ENCODE measurements at regions of chr7 and their contacts with region 1.

Region 1: GRCh38 chr7:8295638-8296361 is 33.8 kb upstream of the ICA1 start:
- DNase-seq: peak; percentile 71
- H3K4me3 ChIP-seq: peak overlapping the region in 1 of 2 experiments; percentile 17; a peak in 1 of 4 replicates
- H3K27ac ChIP-seq: peak overlapping the region in 1 of 2 experiments; percentile 100; a peak in 2 of 4 replicates
- H3K4me1 ChIP-seq: peaks cover 0 to 21% of the 10 kb centered on the region in 2 experiments; a peak in 2 of 4 replicates
- H3K27me3 ChIP-seq: no peaks in the 10 kb centered on the region
- CTCF ChIP-seq: peak; percentile 93
- EP300 ChIP-seq: peak in 1 of 2 experiments; percentile 60; a peak in 2 of 4 replicates
- RAD21 ChIP-seq: peak; percentile 100

Region 2: DNA sequence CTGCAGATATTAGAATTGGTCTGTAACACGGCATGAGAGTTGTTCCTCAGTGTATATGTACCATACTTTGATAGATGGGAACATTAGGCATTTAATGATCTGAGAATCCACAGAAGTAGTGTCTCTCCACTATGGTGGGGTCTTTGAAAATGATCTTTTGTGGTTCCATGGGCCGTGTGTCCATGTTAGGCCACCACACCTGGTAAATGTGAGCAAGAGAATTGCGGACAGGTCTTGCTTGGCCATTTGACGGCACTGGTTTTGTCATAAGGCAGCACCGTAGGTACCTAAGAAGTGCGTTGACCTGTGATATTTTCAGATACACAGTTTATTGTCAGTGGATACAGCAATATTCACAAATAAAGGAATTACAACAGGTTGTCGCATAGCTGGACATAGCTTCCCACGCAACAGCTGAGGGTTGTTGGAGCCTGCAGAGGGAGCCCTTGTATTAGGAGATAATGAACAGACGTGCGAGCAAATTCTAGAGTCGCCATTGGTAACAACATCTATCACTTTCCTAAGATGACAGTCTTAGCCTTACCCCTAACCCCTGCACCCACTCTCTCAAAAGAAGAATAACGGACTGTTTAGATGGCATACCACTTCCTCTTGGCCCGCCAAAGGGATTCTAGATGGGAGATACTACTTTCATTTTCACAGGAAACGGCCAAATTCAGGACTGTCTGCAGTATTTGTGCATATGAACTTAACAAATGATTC is 871.5 kb before region 1 on chr7:
- CTCF ChIA-PET with region 1: interaction called, 29 read pairs
- POLR2A ChIA-PET with region 1: interaction called, 3 read pairs
- DNase-seq: peak; percentile 62
- H3K4me3 ChIP-seq: peak overlapping the region; percentile 51 to 55
- H3K27ac ChIP-seq: no peak overlapping the region
- H3K4me1 ChIP-seq: peaks cover 0 to 9% of the 10 kb centered on the region in 2 experiments; a peak in 2 of 4 replicates
- H3K27me3 ChIP-seq: no peaks in the 10 kb centered on the region
- CTCF ChIP-seq: peak; percentile 100
- EP300 ChIP-seq: no peak
- RAD21 ChIP-seq: peak; percentile 99

Region 3: DNA sequence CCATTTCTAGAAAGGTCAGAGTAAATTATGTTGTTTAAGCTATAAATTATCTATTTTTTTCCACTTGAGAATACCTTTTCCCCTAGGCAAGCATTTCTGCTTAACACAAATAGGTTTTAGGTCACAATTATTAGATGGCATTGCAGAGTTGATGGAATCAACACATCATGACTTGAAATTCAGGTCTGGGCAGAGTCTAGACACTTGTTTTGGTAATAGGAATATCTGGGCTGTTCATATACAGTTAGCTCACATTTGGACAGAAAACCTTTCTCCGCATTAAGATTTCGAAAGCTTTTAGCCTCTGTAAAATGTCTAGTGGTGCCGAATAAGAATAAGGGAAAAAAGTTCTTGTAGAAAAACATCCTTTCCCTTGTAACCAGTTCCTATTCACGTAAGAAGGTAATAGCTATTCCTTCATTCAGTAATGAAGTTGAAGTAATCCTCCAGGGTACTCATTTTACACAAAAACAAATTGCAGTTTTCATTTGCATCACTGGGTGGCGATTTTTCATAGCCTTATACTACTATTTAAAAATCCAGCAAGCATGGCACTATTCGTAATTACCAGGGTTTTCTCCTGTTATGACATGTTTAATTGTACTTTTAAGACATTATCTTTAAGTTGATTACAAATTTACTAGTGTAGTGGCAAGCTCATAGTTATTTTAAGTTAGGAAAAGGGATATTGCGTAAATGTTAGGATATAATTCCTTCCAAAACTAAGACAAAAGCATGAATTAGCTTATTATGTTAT is 614.4 kb before region 1 on chr7:
- CTCF ChIA-PET with region 1: interaction called, 37 read pairs
- POLR2A ChIA-PET with region 1: interaction called, 3 read pairs
- DNase-seq: peak; percentile 48
- H3K4me3 ChIP-seq: no peak overlapping the region
- H3K27ac ChIP-seq: peak overlapping the region in 1 of 2 experiments; percentile 90; a peak in 2 of 4 replicates
- H3K4me1 ChIP-seq: peaks cover 0 to 12% of the 10 kb centered on the region in 2 experiments; a peak in 2 of 4 replicates
- H3K27me3 ChIP-seq: no peaks in the 10 kb centered on the region
- CTCF ChIP-seq: peak; percentile 93
- EP300 ChIP-seq: no peak
- RAD21 ChIP-seq: peak; percentile 93

Region 4: DNA sequence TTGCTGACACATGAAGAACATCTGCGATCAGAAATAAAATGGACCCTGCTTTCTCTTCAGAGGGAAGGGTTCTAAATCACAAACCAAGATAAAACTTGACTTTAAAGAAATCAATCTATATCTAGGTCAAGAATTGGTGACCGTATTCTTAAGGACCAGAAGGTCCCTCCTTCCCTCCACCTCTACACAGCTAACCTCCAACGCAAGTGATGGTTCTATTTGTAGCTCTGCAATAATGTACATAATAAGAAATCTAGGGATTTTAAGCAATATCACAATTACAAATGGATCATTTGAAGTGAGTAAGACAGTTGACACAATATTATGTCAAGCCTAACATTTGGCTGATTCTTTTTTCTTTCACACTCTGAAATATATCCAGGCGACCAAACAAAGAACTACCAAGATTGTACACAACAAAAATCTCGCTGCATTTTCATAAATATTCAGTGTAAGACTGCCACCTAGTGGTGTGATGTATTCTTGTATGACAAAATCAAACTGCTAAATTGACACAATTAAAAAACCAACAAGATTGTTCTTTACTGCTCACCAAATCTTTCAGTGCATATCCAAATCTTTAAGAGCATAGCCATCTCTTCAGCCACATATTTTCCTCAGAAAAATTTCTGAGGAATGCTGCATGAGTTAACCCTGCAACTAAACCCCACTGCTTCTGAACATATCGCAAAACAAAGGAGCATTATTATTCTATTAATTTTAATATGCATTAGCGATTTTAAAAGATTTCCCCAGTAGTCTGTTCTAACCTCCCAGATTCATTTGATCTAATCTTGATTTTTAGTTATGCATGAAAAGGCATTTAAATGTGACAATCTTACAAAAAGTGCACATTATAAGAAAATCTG is 78.4 kb before region 1 on chr7:
- CTCF ChIA-PET with region 1: interaction called, 21 read pairs
- POLR2A ChIA-PET with region 1: interaction called, 3 read pairs
- DNase-seq: peak; percentile 28
- H3K4me3 ChIP-seq: no peak overlapping the region; a peak in 1 of 4 replicates
- H3K27ac ChIP-seq: peak overlapping the region in 1 of 2 experiments; percentile 93; a peak in 2 of 4 replicates
- H3K4me1 ChIP-seq: peaks cover 0 to 67% of the 10 kb centered on the region in 2 experiments; a peak in 2 of 4 replicates
- H3K27me3 ChIP-seq: no peaks in the 10 kb centered on the region
- CTCF ChIP-seq: peak; percentile 90
- EP300 ChIP-seq: no peak
- RAD21 ChIP-seq: peak; percentile 89

Region 5: GRCh38 chr7:8254667-8255066 is 41.1 kb before region 1 on chr7:
- CTCF ChIA-PET with region 1: interaction called, 11 read pairs
- POLR2A ChIA-PET with region 1: interaction called, 122 read pairs
- DNase-seq: no peak
- H3K4me3 ChIP-seq: no peak overlapping the region
- H3K27ac ChIP-seq: peak overlapping the region in 1 of 2 experiments; percentile 81; a peak in 2 of 4 replicates
- H3K4me1 ChIP-seq: peaks cover 0 to 38% of the 10 kb centered on the region in 2 experiments; a peak in 2 of 4 replicates
- H3K27me3 ChIP-seq: no peaks in the 10 kb centered on the region
- CTCF ChIP-seq: no peak
- EP300 ChIP-seq: no peak
- RAD21 ChIP-seq: no peak

Region 6: GRCh38 chr7:8305625-8306381 is 10.0 kb after region 1 on chr7:
- CTCF ChIA-PET with region 1: interaction called, 10 read pairs
- POLR2A ChIA-PET with region 1: no interaction called
- DNase-seq: no peak
- H3K4me3 ChIP-seq: no peak overlapping the region
- H3K27ac ChIP-seq: no peak overlapping the region
- H3K4me1 ChIP-seq: no peaks in the 10 kb centered on the region
- H3K27me3 ChIP-seq: no peaks in the 10 kb centered on the region
- CTCF ChIP-seq: no peak
- EP300 ChIP-seq: no peak
- RAD21 ChIP-seq: no peak

Region 7: DNA sequence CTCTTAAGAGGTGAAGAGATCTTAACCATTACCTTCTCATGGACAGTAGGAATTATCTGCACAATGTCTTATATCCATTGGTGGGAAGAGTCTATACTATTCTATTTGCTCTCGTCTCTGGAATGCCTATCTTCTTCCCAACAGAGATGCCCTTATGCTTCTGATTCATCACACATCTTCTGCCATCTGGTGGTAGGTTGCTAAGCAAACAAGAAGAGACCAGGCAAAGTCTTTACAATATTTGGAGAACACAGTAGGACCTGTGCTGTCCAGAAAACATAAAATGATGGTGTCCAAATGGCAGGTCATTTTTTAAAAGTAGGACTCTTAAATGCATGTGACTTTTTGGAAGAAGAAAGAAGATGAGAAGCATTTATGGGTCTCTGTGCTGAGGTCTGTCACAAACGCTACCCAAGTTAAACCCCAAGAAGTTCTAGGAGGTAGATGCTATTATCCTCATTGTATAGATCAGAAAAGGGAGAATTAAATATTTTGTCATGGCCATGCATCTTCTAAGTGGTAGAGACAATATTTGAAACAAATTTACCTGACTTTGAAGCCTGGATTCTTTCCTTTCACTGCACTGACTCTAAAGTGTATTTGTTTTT is 69.8 kb after region 1 on chr7:
- CTCF ChIA-PET with region 1: interaction called, 23 read pairs
- POLR2A ChIA-PET with region 1: no interaction called
- DNase-seq: no peak
- H3K4me3 ChIP-seq: peak overlapping the region in 1 of 2 experiments; percentile 2; a peak in 1 of 4 replicates
- H3K27ac ChIP-seq: peak overlapping the region in 1 of 2 experiments; percentile 74; a peak in 2 of 4 replicates
- H3K4me1 ChIP-seq: peaks cover 0 to 9% of the 10 kb centered on the region in 2 experiments; a peak in 2 of 4 replicates
- H3K27me3 ChIP-seq: no peaks in the 10 kb centered on the region
- CTCF ChIP-seq: peak; percentile 53
- EP300 ChIP-seq: peak in 1 of 2 experiments; percentile 7; a peak in 1 of 4 replicates
- RAD21 ChIP-seq: peak; percentile 89

Measured in SK-N-SH (cell line).